Tibial artery (tissue), 4 donors: ENCODE measurements at regions of chr10 and their contacts with region 1.

Region 1: GRCh38 chr10:128263891-128264688 is 137.9 kb upstream of the MKI67 start:
- DNase-seq: peak in 1 of 2 donors; percentile 41
- H3K4me3 ChIP-seq: no peak overlapping the region
- H3K27ac ChIP-seq: no peak overlapping the region
- H3K4me1 ChIP-seq: no peaks in the 10 kb centered on the region
- H3K27me3 ChIP-seq: peaks cover 0 to 53% of the 10 kb centered on the region in 2 donors
- CTCF ChIP-seq: peak; percentile 18 to 42

Region 2: DNA sequence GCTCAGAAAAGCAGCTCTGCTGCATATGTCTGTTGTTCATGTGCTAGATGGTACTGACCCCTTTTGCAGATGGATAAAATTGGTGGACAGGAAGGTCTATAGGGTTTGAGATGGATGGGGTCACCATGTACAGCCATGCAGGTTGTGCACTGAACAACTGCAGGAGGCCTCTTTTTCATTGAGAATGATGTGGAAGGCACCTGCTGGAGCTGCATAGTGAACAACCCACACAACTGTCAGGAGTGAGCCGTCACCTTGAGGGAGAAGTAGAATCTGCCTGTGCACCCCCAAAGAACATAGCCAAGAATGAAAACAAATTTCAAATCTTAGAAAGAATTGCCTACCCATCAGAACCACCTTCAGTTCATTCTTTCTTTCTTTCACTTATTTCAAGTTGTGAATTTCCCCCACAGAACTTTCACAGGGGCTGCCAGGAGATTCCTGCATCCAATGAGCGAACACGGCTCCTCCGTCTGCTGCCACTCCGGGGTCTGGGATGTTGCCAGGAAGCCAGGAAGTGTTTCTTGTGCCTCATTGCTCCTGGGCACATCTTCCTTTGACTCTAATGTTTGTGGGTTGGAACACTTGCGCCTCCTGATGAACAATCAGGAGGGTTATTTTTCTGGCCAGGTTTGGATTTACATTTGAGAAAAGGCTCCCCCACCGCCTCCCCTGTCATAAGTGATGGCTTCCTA is 1412.5 kb before region 1 on chr10:
- intact Hi-C with region 1: loop called (anchors 5 kb)
- DNase-seq: no peak
- H3K4me3 ChIP-seq: no peak overlapping the region
- H3K27ac ChIP-seq: no peak overlapping the region
- H3K4me1 ChIP-seq: no peaks in the 10 kb centered on the region
- H3K27me3 ChIP-seq: no peaks in the 10 kb centered on the region
- CTCF ChIP-seq: no peak